ENCODE measurements at regions of chr1 and their contacts with region 1.

Region 1: GRCh38 chr1:110460253-110461220 is 9.6 kb downstream of the PROK1 start:
- DNase-seq: peak; percentile 88
- ATAC-seq: peak; percentile 87
- H3K4me3 Mint-ChIP-seq: no peak overlapping the region
- H3K27ac Mint-ChIP-seq: no peak overlapping the region
- H3K4me1 Mint-ChIP-seq: no peaks in the 10 kb centered on the region
- H3K27me3 Mint-ChIP-seq: no peaks in the 10 kb centered on the region; the same call in 1 of the 2 replicates
- CTCF ChIP-seq: peak; percentile 81

Region 2: GRCh38 chr1:110196917-110197765 is 263.4 kb before region 1 on chr1:
- CTCF ChIA-PET with region 1: interaction called, 58 read pairs
- POLR2A ChIA-PET with region 1: no interaction called
- DNase-seq: peak; percentile 42
- ATAC-seq: peak; percentile 95
- H3K4me3 Mint-ChIP-seq: no peak overlapping the region
- H3K27ac Mint-ChIP-seq: no peak overlapping the region
- H3K4me1 Mint-ChIP-seq: peaks cover 2% of the 10 kb centered on the region; the same call in 1 of the 2 replicates
- H3K27me3 Mint-ChIP-seq: no peaks in the 10 kb centered on the region
- CTCF ChIP-seq: peak; percentile 87

Region 3: GRCh38 chr1:110319332-110320152 is 141.0 kb before region 1 on chr1:
- CTCF ChIA-PET with region 1: interaction called, 14 read pairs
- POLR2A ChIA-PET with region 1: no interaction called
- DNase-seq: no peak
- ATAC-seq: no peak
- H3K4me3 Mint-ChIP-seq: no peak overlapping the region
- H3K27ac Mint-ChIP-seq: no peak overlapping the region
- H3K4me1 Mint-ChIP-seq: no peaks in the 10 kb centered on the region
- H3K27me3 Mint-ChIP-seq: no peaks in the 10 kb centered on the region
- CTCF ChIP-seq: no peak

Region 4: GRCh38 chr1:110360431-110360830 is 100.1 kb before region 1 on chr1:
- CTCF ChIA-PET with region 1: no interaction called
- POLR2A ChIA-PET with region 1: no interaction called
- DNase-seq: no peak
- ATAC-seq: no peak
- H3K4me3 Mint-ChIP-seq: no peak overlapping the region
- H3K27ac Mint-ChIP-seq: no peak overlapping the region
- H3K4me1 Mint-ChIP-seq: no peaks in the 10 kb centered on the region
- H3K27me3 Mint-ChIP-seq: no peaks in the 10 kb centered on the region
- CTCF ChIP-seq: no peak

Region 5: GRCh38 chr1:110412576-110412975 is 48.0 kb before region 1 on chr1:
- CTCF ChIA-PET with region 1: interaction called, 188 read pairs
- POLR2A ChIA-PET with region 1: interaction called, 4 read pairs
- DNase-seq: peak; percentile 82
- ATAC-seq: peak; percentile 78
- H3K4me3 Mint-ChIP-seq: no peak overlapping the region
- H3K27ac Mint-ChIP-seq: no peak overlapping the region
- H3K4me1 Mint-ChIP-seq: peaks cover 23% of the 10 kb centered on the region
- H3K27me3 Mint-ChIP-seq: peaks cover 2% of the 10 kb centered on the region; the same call in 1 of the 2 replicates
- CTCF ChIP-seq: peak; percentile 55; the same call in 1 of the 2 replicates

Region 6: DNA sequence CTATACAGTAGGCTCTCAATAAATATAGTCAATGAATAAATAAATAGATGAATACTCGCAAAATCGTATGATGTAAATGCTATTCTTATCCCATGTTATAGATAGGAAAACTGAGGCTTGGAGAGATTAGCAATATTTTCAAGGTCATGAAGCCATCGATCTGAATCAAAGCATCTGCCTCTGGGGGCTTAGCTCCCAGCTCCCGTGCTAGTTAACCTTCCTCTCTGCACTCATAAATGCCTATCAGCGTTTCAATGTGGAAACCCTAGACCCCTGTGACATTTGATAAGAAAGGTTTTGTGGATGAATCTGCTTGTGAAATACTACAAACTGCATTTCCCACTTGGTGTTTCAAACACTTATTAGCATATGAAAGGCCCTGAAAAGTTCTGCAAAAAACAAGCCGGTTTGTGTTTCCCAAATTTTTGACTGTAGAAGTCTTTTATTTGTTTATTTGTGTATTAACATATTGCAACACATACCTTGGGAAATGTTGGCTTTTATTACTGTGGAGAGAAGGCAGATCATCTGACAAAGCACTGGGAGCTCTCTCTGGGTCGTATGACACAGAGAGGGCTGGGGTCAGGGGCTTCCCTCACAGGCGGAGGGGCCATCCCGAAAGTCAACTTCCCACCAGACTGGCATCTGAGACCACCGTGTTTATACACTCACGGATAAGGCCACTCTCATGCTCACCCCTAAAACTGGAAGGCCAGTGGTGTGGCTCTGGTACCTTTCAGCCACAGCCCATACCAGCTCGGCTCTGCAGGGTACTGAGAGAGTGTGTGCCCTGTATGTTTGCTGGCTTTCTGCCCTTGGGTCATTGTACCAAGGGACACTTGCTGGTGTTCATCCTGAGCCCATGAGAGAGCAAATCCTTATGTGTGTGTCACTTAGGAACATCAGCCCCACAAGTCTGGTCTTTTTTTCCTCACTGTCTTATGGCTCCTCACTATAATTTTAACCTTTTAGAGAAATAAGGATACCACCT is 10.6 kb before region 1 on chr1:
- CTCF ChIA-PET with region 1: interaction called, 15 read pairs
- POLR2A ChIA-PET with region 1: no interaction called
- DNase-seq: no peak
- ATAC-seq: peak; percentile 14; the same call in 1 of the 2 replicates
- H3K4me3 Mint-ChIP-seq: no peak overlapping the region
- H3K27ac Mint-ChIP-seq: 0 out of 2 replicates have a peak overlapping the region, but pooled peaks have one; percentile 11
- H3K4me1 Mint-ChIP-seq: peaks cover 19% of the 10 kb centered on the region
- H3K27me3 Mint-ChIP-seq: no peaks in the 10 kb centered on the region
- CTCF ChIP-seq: no peak

Region 7: DNA sequence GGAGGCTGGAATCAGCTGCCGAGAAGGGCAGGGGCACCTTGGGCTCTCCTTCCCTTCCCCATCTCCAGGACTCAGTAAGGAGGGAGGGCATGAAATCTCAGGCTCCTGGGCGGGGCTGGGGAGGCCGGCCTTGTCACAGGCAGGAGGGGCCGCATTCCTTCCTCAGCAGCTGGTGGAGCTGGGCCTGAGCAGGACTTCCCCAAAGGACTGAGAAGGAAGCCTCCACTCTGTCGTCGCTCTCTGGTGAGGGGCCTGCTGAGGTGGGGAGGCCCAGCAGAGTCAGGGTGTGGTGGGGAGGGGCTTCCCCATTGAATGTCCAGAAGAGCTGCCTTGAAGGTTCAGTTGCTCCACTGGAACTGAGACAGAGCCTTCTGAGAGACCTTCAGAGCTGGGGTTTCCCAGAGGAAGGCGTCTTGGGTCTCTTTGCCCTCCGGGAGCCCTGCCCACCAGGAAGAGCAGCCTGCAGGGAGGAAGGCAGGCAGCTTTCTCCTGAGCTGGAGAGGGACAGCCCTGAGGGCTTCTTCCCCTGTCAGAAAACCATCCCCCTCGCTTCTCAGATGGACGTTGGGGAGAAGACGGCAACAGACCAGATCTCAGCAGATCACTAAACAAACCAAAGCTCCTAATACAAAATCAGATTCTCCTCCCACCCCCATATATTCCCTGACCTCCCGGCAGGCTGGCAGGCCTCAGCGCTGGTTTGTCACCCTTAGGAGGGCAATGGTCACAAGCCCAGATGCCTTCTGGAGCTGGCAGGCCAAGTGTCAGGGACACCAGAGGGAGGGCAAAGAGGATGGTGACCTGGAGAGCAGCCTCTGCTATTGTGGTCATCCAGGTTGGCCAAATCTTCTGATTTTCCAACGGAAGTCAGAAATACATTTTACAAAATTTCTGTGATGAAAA is 47.8 kb after region 1 on chr1:
- CTCF ChIA-PET with region 1: interaction called, 11 read pairs
- POLR2A ChIA-PET with region 1: no interaction called
- DNase-seq: peak; percentile 64
- ATAC-seq: peak; percentile 96
- H3K4me3 Mint-ChIP-seq: no peak overlapping the region
- H3K27ac Mint-ChIP-seq: no peak overlapping the region
- H3K4me1 Mint-ChIP-seq: peaks cover 13% of the 10 kb centered on the region
- H3K27me3 Mint-ChIP-seq: no peaks in the 10 kb centered on the region; the same call in none of the 2 replicates
- CTCF ChIP-seq: no peak

Region 8: GRCh38 chr1:110645821-110646735 is 185.5 kb after region 1 on chr1:
- CTCF ChIA-PET with region 1: no interaction called
- POLR2A ChIA-PET with region 1: no interaction called
- DNase-seq: no peak
- ATAC-seq: no peak
- H3K4me3 Mint-ChIP-seq: no peak overlapping the region
- H3K27ac Mint-ChIP-seq: no peak overlapping the region
- H3K4me1 Mint-ChIP-seq: no peaks in the 10 kb centered on the region
- H3K27me3 Mint-ChIP-seq: peaks cover 6% of the 10 kb centered on the region; the same call in 1 of the 2 replicates
- CTCF ChIP-seq: no peak

Measured in WTC11 (cell line).